G401 (cell line): ENCODE measurements at regions of chr7 and their contacts with region 1.

Region 1: GRCh38 chr7:129083525-129083924 is 28.6 kb upstream of the TNPO3 start:
- DNase-seq: no peak

Region 2: GRCh38 chr7:129126314-129126713 is 42.8 kb after region 1 on chr7:
- in situ Hi-C with region 1: loop called (anchors 5 kb)
- DNase-seq: no peak

Region 3: GRCh38 chr7:129258649-129259389 is 175.3 kb after region 1 on chr7:
- in situ Hi-C with region 1: no loop called
- DNase-seq: no peak